Activated T-helper 1 cell treated with anti-CD3 and anti-CD28 coated beads, Interleukin-12 subunit alpha, Interleukin-12 subunit beta, Interleukin-2, Interleukin-4 antibody, amounts not matched to agents 30 ng/mL and 10 ng/mL and 1 ng/mL, durations not matched to agents 14 hours and 24 hours and 36 hours (primary cell): ENCODE measurements at regions of chr12 and their contacts with region 1.

Region 1: DNA sequence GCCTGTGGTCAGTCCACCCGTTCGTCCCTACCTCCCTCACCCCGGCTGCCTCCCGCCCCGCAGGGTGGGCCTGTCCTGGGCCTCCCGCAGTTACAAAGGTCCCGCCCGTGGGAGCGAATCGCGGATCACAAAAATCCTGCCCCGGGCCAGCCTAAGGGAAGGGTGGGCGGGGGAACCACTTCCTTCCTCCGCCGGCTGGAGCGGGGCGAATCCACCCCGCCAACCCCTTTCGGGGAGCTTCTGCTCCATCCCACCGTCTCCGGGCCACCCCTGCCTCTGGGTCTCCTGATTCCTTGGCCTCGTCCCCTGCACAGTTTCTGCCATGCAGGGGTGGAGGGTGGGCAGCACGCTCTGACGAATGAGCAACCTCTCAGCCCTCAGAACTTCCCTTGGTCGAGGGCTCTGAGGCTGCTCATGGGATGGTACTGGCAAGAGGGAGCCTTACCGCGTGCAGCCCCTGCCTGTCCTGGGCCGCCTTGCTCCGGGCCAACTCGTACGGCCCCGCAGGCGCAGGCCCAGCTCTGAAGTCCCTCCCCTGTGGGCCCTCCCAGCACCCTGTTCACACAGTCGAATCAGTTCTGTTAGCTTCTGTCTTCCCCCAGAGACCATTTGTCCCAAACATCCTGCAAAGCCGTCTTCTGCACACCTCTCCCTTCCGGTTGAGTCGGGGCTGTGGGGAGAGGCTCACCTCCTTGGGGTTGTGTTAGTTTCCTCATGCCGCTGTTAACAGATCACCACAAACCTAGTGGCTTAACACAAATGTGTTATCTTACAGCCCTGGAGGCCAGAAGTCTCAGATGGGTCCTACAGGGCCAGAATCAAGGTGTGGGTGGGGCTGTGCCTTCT is 589 bp upstream of the HVCN1 start:
- DNase-seq: peak; percentile 51
- H3K4me3 Mint-ChIP-seq: peak overlapping the region; percentile 89
- H3K27ac Mint-ChIP-seq: peak overlapping the region; percentile 89
- H3K4me1 Mint-ChIP-seq: peaks cover 52% of the 10 kb centered on the region
- H3K27me3 Mint-ChIP-seq: peaks cover 7% of the 10 kb centered on the region

Region 2: DNA sequence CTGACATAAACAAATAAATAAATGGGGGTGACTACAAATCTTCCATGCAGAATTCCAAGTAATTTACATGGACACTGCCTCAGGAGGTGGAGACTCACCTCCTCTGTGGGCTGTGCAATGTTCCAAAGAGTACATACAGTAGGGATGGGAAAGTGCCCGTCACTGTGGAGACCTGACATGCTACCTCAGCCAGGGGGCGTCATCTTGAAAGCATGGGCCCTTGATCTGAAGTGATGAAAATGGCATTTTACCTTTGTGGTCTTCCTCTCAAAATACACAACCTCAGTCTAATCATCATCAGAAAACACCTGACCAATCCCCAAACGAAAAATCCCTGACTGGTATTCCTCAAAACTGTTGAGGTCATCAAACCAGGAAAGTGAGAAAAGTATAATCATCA is 334.4 kb before region 1 on chr12:
- intact Hi-C with region 1: no loop called
- DNase-seq: no peak
- H3K4me3 Mint-ChIP-seq: no peak overlapping the region
- H3K27ac Mint-ChIP-seq: no peak overlapping the region
- H3K4me1 Mint-ChIP-seq: peaks cover 29% of the 10 kb centered on the region
- H3K27me3 Mint-ChIP-seq: no peaks in the 10 kb centered on the region

Region 3: GRCh38 chr12:110501752-110502738 is 187.5 kb before region 1 on chr12 and contains the starts of genes RAD9B and VPS29:
- intact Hi-C with region 1: loop called (anchors 5 kb)
- DNase-seq: peak; percentile 99
- H3K4me3 Mint-ChIP-seq: peak within 1 kb of the TSS; percentile 90
- H3K27ac Mint-ChIP-seq: peak within 1 kb of the TSS; percentile 90
- H3K4me1 Mint-ChIP-seq: peaks cover 29% of the 10 kb centered on the region
- H3K27me3 Mint-ChIP-seq: no peaks in the 10 kb centered on the region
- total RNA-seq, gene RAD9B: 0.88 and 1.4 TPM in 2 replicates
- total RNA-seq, gene VPS29: 109 and 111 TPM in 2 replicates

Region 4: GRCh38 chr12:110619534-110619953 is 70.0 kb before region 1 on chr12:
- intact Hi-C with region 1: loop called (anchors 1 kb)
- DNase-seq: no peak
- H3K4me3 Mint-ChIP-seq: peak overlapping the region; percentile 37
- H3K27ac Mint-ChIP-seq: peak overlapping the region; percentile 77
- H3K4me1 Mint-ChIP-seq: peaks cover 10% of the 10 kb centered on the region
- H3K27me3 Mint-ChIP-seq: peaks cover 4% of the 10 kb centered on the region

Region 5: DNA sequence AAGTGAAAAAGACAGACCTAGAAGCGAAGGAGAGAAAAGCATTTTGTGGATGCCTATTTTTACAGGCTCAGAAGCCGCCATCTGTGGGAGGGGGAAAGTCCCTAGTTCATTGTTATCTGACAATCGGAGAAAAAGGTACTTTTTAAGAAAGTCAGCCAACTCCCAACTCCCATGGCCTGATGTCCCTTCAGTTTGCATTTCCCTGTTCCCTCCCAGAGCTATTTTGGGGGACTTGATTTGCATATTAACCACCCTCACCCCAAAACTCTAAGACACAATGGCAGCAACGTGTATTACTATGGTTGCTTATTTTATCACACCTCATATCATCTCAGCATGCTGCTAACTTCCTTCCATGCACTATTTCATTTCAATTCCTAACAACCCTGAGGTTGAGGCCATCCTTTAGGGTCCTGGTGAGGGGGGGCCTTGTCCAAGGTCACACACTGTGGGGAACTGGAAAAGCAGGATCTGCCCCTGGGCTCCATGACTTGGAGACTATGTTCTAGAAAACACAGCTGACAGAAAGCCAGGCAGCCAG is 19.3 kb before region 1 on chr12:
- intact Hi-C with region 1: loop called (anchors 1 kb)
- DNase-seq: peak; percentile 37
- H3K4me3 Mint-ChIP-seq: peak overlapping the region; percentile 52
- H3K27ac Mint-ChIP-seq: peak overlapping the region; percentile 80
- H3K4me1 Mint-ChIP-seq: peaks cover 46% of the 10 kb centered on the region
- H3K27me3 Mint-ChIP-seq: peaks cover 2% of the 10 kb centered on the region

Region 6: GRCh38 chr12:110917466-110917865 is 228.0 kb after region 1 on chr12:
- intact Hi-C with region 1: no loop called
- DNase-seq: no peak
- H3K4me3 Mint-ChIP-seq: no peak overlapping the region
- H3K27ac Mint-ChIP-seq: no peak overlapping the region
- H3K4me1 Mint-ChIP-seq: no peaks in the 10 kb centered on the region
- H3K27me3 Mint-ChIP-seq: peaks cover 7% of the 10 kb centered on the region